Posterior vena cava (tissue), 2 donors: ENCODE measurements at regions of chr7 and their contacts with region 1.

Region 1: GRCh38 chr7:139960157-139960556 is 102.6 kb downstream of the PARP12 start:
- DNase-seq: no peak

Region 2: GRCh38 chr7:139842401-139843210 is 117.6 kb before region 1 on chr7:
- intact Hi-C with region 1: loop called in 1 of 2 experiments (anchors 10 kb)
- DNase-seq: no peak

Region 3: DNA sequence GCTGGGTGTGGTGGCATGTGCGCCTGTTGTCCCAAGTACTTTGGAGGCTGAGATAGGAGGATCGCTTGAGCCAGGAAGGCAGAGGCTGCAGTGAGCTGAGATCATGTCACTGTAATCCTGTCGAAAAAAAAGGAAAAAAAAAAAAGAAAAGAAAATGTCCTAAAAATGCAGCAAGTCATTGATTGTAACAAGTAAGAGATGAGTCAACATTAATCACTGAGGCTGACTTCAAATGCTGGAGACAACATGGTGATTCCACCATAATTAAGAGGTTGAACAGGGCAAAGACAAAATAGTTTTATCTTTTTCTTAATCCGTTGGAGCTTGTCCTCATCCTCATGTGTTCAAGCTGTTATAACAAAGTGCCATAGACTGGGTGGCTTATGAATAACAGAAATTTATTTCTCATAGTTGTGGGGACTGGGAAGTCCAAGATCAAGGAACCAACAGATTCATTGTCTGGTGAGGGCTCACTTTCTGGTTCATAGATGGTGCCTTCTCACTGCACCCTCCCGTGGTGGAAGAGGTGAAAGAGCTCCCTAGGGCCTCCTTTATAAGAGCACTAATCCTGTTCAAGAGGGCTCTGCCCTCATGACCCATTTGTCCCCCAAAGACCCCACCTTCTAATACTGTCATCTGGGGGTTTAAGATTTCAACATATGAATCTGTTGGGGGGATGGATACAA is 70.8 kb before region 1 on chr7:
- intact Hi-C with region 1: no loop called
- DNase-seq: no peak

Region 4: GRCh38 chr7:139973101-139974050 is 13.2 kb after region 1 on chr7:
- intact Hi-C with region 1: no loop called
- DNase-seq: no peak

Region 5: DNA sequence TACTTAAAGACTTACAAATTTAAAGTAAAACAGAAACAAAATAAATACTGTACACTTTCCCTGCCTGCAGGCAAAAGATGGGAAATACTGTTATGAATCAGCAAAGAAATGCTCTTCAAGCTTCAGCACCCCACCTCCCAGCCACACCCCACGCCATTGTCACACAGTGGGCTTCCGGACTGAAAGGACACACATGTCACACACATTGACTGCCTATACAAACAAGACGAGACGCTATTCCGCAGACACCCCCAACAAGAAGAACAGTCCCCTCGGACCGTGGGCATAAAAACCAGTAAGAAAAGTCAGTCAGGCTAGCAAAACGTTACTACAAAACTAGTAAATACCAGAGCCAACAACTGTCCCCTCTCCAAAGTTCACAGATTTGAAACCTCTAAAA is 124.8 kb after region 1 on chr7:
- intact Hi-C with region 1: no loop called
- DNase-seq: no peak